HepG2 (cell line): ENCODE measurements at regions of chr16 and their contacts with region 1.

Region 1: GRCh38 chr16:77359065-77359502 is 75.8 kb downstream of the ADAMTS18 start:
- DNase-seq: peak; percentile 96
- ATAC-seq: peak; percentile 99
- H3K4me3 ChIP-seq: no peak overlapping the region
- H3K27ac ChIP-seq: no peak overlapping the region
- H3K4me1 ChIP-seq: peaks cover 29% of the 10 kb centered on the region
- H3K27me3 ChIP-seq: peaks cover 0 to 9% of the 10 kb centered on the region in 2 experiments; a peak in 2 of 5 replicates
- CTCF ChIP-seq: no peak
- EP300 ChIP-seq: peak in 1 of 2 experiments; percentile 90; a peak in 2 of 4 replicates
- POLR2A ChIP-seq: no peak
- RAD21 ChIP-seq: no peak

Region 2: DNA sequence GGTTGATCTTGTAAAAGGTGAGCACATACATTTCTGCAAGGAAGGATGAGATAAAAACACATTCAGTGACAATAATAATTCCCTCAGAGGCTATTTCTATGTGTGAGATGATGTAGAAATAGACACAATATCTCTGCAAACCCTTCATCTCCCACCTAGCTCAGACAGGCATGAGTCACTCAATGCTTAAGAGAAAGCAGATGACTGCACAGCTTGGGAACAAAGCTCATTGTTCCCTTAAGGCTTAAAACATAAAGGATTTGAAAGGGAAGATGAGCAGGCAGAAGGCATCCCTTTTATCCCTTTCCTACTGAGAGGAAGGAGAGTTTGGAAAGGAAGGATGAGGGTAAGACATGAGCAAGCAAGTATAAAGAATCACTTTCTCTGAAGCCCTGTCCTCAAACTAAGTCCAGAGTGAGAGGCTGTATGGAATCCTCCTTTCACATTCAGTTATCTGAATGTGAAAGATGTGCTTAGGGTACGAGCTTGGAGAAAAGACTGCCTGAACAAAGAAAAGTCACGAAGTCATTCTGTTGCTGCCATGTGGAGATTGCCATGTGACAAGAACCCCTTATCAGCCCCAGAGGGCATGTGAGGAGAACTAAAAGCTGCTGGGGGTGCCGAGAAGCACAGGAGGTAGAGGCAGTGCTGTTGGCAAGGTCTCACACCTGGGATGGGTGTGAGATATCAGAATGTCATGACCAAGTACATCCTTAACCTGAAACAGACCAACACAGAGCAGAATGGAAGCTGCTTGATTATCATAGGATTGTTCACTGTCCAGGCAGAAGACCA is 1023.7 kb before region 1 on chr16:
- CTCF ChIA-PET with region 1: no interaction called
- POLR2A ChIA-PET with region 1: no interaction called
- in situ Hi-C with region 1: no loop called
- intact Hi-C with region 1: no loop called
- DNase-seq: no peak
- ATAC-seq: no peak
- H3K4me3 ChIP-seq: no peak overlapping the region
- H3K27ac ChIP-seq: no peak overlapping the region
- H3K4me1 ChIP-seq: no peaks in the 10 kb centered on the region
- H3K27me3 ChIP-seq: no peaks in the 10 kb centered on the region; a peak in 1 of 5 replicates
- CTCF ChIP-seq: no peak
- EP300 ChIP-seq: no peak
- POLR2A ChIP-seq: no peak
- RAD21 ChIP-seq: no peak

Region 3: DNA sequence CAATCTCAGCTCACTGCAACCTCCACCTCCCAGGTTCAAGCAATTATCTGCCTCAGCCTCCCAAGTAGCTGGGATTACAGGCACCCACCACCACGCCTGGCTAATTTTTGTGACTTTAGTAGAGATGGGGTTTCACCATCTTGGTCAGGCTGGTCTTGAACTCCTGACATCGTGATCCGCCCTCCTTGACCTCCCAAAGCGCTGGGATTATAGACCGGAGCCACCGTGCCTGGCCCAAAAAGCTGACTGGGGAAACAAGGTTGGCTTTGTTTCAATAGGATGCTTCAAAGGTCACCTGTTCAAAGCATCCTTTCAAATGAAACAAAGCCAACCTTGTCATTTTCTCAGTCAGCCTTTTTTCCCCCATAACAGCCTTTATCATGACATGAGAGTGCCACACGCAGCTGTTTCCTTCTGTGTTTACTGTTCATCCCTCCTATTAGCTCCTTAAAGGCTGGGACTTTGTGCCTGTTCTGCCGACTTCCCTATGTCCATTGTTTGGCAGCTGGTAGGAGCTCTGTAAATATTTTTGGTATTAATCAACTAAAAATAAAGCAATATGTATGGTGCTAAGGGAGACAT is 24.6 kb after region 1 on chr16:
- CTCF ChIA-PET with region 1: no interaction called
- POLR2A ChIA-PET with region 1: no interaction called
- in situ Hi-C with region 1: no loop called
- intact Hi-C with region 1: loop called (anchors 2 kb)
- DNase-seq: peak; percentile 74
- ATAC-seq: peak; percentile 86
- H3K4me3 ChIP-seq: no peak overlapping the region
- H3K27ac ChIP-seq: no peak overlapping the region
- H3K4me1 ChIP-seq: peaks cover 32% of the 10 kb centered on the region
- H3K27me3 ChIP-seq: no peaks in the 10 kb centered on the region
- CTCF ChIP-seq: no peak
- EP300 ChIP-seq: peak in 1 of 2 experiments; percentile 74; a peak in 2 of 4 replicates
- POLR2A ChIP-seq: no peak
- RAD21 ChIP-seq: no peak